Heart right ventricle (tissue), 16 donors: ENCODE measurements at regions of chr17 and their contacts with region 1.

Region 1: DNA sequence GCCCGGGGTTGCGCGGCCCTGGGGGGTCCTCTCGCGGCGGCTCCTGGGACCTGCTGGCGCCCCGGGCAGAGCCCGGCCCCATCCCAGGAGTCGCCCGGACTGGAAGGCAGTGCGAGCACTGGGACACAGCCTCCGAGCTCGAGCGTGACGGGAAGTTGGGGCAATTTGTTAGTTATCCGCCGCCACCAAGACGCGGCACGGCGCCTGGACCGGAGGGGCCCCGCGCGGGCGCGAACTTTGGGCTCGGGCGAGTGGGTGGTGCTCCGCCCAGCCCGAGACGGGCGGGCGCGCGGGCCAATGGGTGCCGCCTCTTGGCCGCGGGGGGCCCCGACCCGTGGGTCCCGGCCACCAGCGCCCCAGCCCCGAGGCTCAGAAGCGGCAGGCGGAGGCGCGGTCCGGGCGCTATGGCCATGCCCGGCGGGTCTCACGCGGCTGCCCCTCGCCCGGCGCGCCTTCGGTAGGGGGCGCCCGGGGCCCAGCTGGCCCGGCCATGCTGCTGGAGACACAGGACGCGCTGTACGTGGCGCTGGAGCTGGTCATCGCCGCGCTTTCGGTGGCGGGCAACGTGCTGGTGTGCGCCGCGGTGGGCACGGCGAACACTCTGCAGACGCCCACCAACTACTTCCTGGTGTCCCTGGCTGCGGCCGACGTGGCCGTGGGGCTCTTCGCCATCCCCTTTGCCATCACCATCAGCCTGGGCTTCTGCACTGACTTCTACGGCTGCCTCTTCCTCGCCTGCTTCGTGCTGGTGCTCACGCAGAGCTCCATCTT is at the start of gene ADORA2B:
- DNase-seq: peak; percentile 41 to 66
- ATAC-seq: peak; percentile 77 to 87 (median 79)
- H3K4me3 ChIP-seq: peak within 1 kb of the TSS; percentile 9 to 71 (median 61)
- H3K27ac ChIP-seq: peak within 1 kb of the TSS; percentile 13 to 78 (median 54)
- H3K4me1 ChIP-seq: peaks cover 6 to 58% (median 18%) of the 10 kb centered on the region in 9 donors
- H3K27me3 ChIP-seq: peaks cover 0 to 27% (median 7%) of the 10 kb centered on the region in 7 donors
- CTCF ChIP-seq: peak; percentile 28 to 68 (median 54)
- total RNA-seq, gene ADORA2B: 0.18 to 2.0 (median 0.64) TPM

Region 2: DNA sequence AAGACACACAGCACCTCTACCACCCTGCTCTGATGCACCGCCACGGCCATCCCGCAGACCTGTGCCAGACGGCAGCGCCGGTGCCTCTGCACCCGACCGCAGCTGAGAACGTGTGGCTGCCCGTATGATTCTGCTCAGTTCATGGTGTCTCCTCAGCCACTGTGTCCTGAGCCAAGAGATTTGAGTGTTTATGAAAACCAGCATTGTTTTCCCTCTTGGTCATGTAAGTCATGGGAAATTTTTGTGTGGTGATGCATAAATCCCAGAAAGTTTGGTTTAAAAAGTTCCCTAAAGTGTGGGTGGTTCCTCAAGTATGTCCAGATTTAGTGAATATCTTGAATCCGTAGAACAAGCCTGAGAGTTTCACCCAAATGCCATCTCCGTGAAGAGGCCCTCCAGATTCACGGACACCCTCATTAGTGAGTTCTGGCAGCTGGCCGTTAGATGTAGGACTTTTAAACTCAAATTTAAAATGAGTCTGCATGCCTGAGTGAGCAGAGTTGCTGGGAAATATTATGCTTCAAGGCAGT is 535.2 kb before region 1 on chr17:
- intact Hi-C with region 1: no loop called
- DNase-seq: peak in 1 of 2 donors; percentile 37
- ATAC-seq: peak; percentile 59 to 76 (median 70)
- H3K4me3 ChIP-seq: peak overlapping the region in 4 of 10 donors; percentile 13 to 16 (median 14)
- H3K27ac ChIP-seq: peak overlapping the region; percentile 48 to 81 (median 74)
- H3K4me1 ChIP-seq: peaks cover 3 to 47% (median 20%) of the 10 kb centered on the region in 9 donors
- H3K27me3 ChIP-seq: no peaks in the 10 kb centered on the region
- CTCF ChIP-seq: no peak

Region 3: DNA sequence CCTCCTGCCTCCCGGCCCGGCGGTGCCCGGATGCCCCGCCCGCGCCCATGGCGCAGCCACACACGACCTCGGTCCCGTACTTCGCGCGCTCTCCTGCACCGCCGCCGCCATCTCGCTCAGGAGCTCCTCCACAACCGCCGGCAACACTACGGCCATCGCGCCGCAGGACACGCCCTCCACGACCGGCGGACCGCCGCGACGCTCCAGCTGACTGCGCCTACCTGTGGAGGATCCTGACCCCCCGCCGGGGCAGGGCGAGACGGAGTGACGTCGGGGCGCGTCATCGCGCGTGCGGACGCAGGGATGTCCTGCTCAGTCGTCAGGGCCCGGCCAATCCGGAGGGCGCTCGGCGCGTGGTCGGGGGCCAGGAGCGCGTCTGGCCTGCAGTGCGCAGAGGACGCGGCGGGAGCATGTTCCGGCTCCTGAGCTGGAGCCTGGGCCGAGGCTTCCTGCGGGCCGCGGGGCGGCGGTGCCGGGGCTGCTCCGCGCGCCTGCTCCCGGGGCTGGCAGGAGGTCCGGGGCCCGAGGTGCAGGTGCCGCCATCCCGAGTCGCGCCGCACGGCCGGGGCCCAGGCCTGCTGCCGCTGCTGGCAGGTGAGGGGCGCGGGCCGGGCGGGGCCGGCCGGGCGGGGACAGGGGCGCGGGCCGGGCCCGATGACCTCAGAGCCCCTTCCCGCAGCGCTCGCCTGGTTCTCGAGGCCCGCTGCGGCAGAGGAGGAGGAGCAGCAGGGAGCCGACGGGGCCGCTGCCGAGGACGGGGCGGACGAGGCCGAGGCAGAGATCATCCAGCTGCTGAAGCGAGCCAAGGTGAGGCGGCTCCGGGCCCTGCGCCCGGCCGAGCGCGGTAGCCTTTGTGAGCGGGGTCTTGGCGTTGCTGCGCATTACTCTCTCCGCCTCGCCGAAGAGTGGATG is 54.8 kb after region 1 on chr17 and contains the starts of genes TTC19 and ZSWIM7:
- intact Hi-C with region 1: loop called in 4 of 10 experiments (anchors 5 to 10 kb)
- DNase-seq: peak; percentile 97 to 98
- ATAC-seq: peak; percentile 97 to 99 (median 98)
- H3K4me3 ChIP-seq: peak within 1 kb of the TSS; percentile 70 to 95 (median 84)
- H3K27ac ChIP-seq: peak within 1 kb of the TSS; percentile 85 to 97 (median 94)
- H3K4me1 ChIP-seq: peaks cover 0 to 66% (median 45%) of the 10 kb centered on the region in 9 donors
- H3K27me3 ChIP-seq: no peaks in the 10 kb centered on the region
- CTCF ChIP-seq: peak in 2 of 9 donors; percentile 5 to 30
- total RNA-seq, gene TTC19: 25.1 to 41.1 (median 28.2) TPM
- total RNA-seq, gene ZSWIM7: 28.5 to 41.8 (median 34.1) TPM

Region 4: DNA sequence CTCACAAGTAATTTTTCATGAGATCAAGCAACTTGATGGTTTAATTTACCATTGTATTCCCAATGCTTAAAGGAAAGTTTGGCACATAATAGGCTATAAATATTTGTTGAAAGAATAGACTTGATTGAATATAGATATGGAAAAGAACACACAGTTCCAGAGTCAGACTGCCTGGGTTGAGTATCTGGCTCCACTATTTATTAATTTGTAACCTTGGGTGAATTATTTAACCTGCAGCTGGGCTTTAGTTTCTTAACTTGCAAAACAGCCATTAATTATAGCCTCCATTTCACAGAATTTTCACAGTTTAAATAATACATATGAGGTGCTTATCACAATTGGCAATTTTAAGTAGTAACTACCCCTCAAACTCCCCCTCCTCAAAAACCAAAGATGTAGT is 196.7 kb after region 1 on chr17:
- intact Hi-C with region 1: no loop called
- DNase-seq: no peak
- ATAC-seq: no peak
- H3K4me3 ChIP-seq: no peak overlapping the region
- H3K27ac ChIP-seq: peak overlapping the region in 1 of 10 donors; percentile 2
- H3K4me1 ChIP-seq: peaks cover 0 to 6% (median 0%) of the 10 kb centered on the region in 9 donors
- H3K27me3 ChIP-seq: no peaks in the 10 kb centered on the region
- CTCF ChIP-seq: no peak